MCF 10A (cell line): ENCODE measurements at regions of chr19 and their contacts with region 1.

Region 1: DNA sequence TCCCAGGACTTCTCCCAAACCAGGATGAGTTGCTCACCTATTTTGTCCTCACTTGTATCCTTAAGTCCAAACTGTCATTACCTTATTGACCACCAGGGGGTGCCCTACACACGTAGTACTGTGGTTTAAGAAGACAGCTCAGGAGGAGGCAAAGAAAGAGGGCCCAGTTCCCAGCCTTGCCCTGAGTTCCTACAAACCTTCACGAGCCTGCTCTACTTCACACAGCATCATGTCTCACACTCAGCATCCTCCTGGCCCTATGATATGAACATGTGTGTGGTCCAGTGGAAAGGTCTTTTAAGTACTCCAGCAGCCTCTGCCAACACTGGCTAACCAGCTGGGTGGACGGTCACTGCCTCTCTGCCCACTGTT is 8.1 kb upstream of the ZNF784 start:
- DNase-seq: peak; percentile 96
- H3K4me3 Mint-ChIP-seq: no peak overlapping the region
- H3K27ac Mint-ChIP-seq: no peak overlapping the region
- H3K4me1 Mint-ChIP-seq: peaks cover 30% of the 10 kb centered on the region
- H3K27me3 Mint-ChIP-seq: no peaks in the 10 kb centered on the region
- CTCF ChIP-seq: peak; percentile 66

Region 2: DNA sequence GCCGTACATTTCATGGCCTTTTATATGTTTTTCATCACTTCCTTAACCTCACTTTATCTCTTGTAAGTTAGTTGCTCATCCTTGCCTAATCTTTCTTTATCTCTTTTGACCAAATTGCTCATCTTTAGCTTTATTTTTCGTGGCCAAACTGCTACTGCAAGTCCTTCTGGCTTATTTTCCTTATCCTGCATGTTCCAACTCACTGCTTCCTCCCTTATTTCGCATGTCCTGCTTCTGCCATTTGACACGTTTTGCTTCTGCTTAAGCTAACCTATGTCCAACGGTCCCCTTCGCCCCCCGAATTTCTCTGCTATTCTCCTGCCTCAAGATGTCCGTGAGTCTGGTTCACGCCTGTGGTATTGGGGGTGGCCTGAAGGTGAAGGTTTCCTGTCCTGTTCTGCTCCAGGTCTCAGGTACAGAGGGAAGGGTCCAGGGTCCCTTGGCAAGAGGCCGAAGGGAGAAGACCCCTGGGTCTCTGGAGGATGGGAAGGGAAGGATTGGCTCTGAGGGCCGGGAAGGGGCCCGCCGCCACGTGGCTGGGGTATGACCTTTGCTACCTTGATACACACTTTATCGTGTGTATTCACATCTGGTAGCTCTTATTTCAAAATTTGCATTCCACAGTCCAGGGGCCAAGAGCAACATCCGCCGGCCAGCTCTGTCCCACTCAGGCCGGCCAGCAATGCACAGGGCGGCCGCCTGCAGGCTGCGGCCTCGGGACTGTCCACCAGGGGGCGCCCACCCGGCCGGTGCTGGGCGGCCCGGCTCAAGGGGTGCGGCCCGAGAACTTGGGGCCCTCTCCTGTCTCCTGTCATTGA is 165.0 kb before region 1 on chr19:
- CTCF ChIA-PET with region 1: interaction called, 7 read pairs
- POLR2A ChIA-PET with region 1: no interaction called
- intact Hi-C with region 1: loop called (anchors 1 kb)
- DNase-seq: peak; percentile 65
- H3K4me3 Mint-ChIP-seq: no peak overlapping the region
- H3K27ac Mint-ChIP-seq: no peak overlapping the region
- H3K4me1 Mint-ChIP-seq: peaks cover 2% of the 10 kb centered on the region
- H3K27me3 Mint-ChIP-seq: no peaks in the 10 kb centered on the region
- CTCF ChIP-seq: peak; percentile 98

Region 3: DNA sequence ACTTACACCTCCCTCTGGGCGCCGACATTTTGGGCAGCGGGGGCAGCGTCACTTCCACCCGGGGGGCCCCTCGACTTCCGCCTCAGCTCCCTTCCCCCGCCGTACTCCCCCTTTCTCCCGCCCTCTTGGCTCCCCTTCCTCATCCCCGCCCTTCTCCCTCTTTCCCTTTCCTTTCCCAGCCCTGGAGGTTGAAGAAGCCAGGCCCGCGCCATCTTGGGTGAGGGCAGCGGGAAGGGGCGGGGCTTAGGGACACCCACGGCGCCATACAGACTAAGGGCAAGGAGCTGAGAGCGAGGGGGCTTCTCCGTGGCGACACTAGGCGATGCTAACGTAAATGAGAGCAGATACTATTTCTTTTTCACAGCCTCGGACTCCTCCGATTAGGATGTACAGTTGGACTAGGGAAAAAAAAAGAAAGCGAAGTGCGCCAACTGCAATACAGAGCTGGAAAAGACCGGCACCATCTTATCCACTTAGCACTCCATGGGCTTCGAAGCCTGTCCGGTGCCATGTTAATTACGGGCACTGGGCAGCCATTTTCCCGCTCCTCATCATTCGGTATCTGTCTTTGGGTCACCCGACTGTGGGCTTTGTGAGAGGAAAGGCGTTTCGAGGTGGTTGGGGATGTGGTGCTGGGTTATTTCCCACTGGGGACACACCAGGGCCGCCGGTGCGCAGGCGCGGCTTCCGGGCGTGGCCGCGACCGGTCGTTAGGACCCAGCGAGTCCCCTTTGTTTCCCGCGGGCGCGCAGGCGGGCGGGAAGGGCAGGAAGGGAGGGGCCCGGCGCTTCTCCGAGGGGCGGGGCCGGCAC is 32.8 kb before region 1 on chr19 and contains the start of gene FIZ1:
- CTCF ChIA-PET with region 1: interaction called, 23 read pairs
- POLR2A ChIA-PET with region 1: interaction called, 19 read pairs
- intact Hi-C with region 1: no loop called
- DNase-seq: peak; percentile 100
- H3K4me3 Mint-ChIP-seq: peak within 1 kb of the TSS; percentile 97
- H3K27ac Mint-ChIP-seq: peak within 1 kb of the TSS; percentile 99
- H3K4me1 Mint-ChIP-seq: peaks cover 39% of the 10 kb centered on the region
- H3K27me3 Mint-ChIP-seq: no peaks in the 10 kb centered on the region
- CTCF ChIP-seq: no peak
- total RNA-seq, gene FIZ1: 13.5 and 16.3 TPM in 2 replicates

Region 4: GRCh38 chr19:55643348-55644176 is 11.1 kb after region 1 on chr19 and contains the start of gene ZNF581:
- CTCF ChIA-PET with region 1: interaction called, 25 read pairs
- POLR2A ChIA-PET with region 1: interaction called, 25 read pairs
- intact Hi-C with region 1: no loop called
- DNase-seq: peak; percentile 79
- H3K4me3 Mint-ChIP-seq: peak within 1 kb of the TSS; percentile 82
- H3K27ac Mint-ChIP-seq: peak within 1 kb of the TSS; percentile 94
- H3K4me1 Mint-ChIP-seq: peaks cover 18% of the 10 kb centered on the region
- H3K27me3 Mint-ChIP-seq: no peaks in the 10 kb centered on the region
- CTCF ChIP-seq: no peak
- total RNA-seq, gene ZNF581: 22.3 and 25.7 TPM in 2 replicates

Region 5: GRCh38 chr19:56333505-56333904 is 701.1 kb after region 1 on chr19:
- CTCF ChIA-PET with region 1: interaction called, 3 read pairs
- POLR2A ChIA-PET with region 1: no interaction called
- intact Hi-C with region 1: loop called (anchors 10 kb)
- DNase-seq: peak; percentile 62
- H3K4me3 Mint-ChIP-seq: no peak overlapping the region
- H3K27ac Mint-ChIP-seq: no peak overlapping the region
- H3K4me1 Mint-ChIP-seq: no peaks in the 10 kb centered on the region
- H3K27me3 Mint-ChIP-seq: peaks cover 11% of the 10 kb centered on the region
- CTCF ChIP-seq: peak; percentile 69